Heart right ventricle (tissue), 16 donors: ENCODE measurements at regions of chr7 and their contacts with region 1.

Region 1: DNA sequence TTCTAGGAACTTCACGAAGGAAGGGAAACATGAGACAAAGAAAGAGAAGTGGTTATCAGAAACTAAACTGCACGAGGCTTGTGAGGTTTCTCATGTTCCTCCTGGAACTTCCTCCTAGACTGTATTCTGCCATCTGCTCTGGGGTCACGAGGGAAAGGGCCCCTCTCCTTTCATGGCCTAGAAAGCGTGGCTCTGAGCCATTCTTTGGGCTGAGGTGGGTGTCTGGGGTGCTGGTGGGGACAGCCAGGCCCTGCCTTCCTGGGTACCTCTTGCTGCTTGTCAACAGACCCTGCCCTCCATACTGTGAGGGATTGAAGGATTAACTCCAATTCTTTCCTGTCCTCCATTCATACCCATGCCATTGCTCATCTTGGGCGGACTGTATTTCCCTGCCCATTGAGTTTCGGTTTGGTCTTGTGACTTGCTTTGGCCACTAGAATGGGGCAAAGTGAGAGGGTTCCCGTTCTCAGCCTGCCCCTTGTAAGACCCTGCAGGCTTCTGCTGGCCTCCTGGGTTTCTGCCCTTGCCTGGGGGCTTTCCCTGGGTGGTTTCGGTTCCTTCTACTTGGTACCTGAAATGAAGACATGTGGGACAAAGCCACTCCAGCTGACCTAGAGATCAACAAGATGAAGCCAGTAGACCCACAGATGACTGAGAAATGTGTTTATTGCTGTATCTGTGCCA is 14.9 kb upstream of the GIMAP8 start:
- DNase-seq: no peak
- ATAC-seq: peak in 6 of 8 donors; percentile 50 to 67 (median 58)
- H3K4me3 ChIP-seq: no peak overlapping the region
- H3K27ac ChIP-seq: peak overlapping the region in 1 of 10 donors; percentile 52
- H3K4me1 ChIP-seq: peaks cover 0 to 38% (median 0%) of the 10 kb centered on the region in 9 donors
- H3K27me3 ChIP-seq: peaks cover 0 to 17% (median 4%) of the 10 kb centered on the region in 7 donors
- CTCF ChIP-seq: no peak

Region 2: GRCh38 chr7:151008511-151009323 is 573.2 kb after region 1 on chr7:
- intact Hi-C with region 1: loop called in 1 of 10 experiments (anchors 10 kb)
- DNase-seq: peak; percentile 72 to 88
- ATAC-seq: peak; percentile 51 to 79 (median 72)
- H3K4me3 ChIP-seq: peak overlapping the region in 7 of 10 donors; percentile 10 to 42 (median 38)
- H3K27ac ChIP-seq: peak overlapping the region in 8 of 10 donors; percentile 7 to 66 (median 47)
- H3K4me1 ChIP-seq: peaks cover 10 to 76% (median 56%) of the 10 kb centered on the region in 9 donors
- H3K27me3 ChIP-seq: peaks cover 0 to 13% (median 0%) of the 10 kb centered on the region in 7 donors
- CTCF ChIP-seq: peak; percentile 60 to 89 (median 82)